WTC11 (cell line): ENCODE measurements at regions of chr5 and their contacts with region 1.

Region 1: GRCh38 chr5:141960449-141961202 is 2.6 kb upstream of the PCDH12 start:
- DNase-seq: peak; percentile 88
- ATAC-seq: peak; percentile 90
- H3K4me3 Mint-ChIP-seq: no peak overlapping the region
- H3K27ac Mint-ChIP-seq: 0 out of 2 replicates have a peak overlapping the region, but pooled peaks have one; percentile 24
- H3K4me1 Mint-ChIP-seq: peaks cover 38% of the 10 kb centered on the region
- H3K27me3 Mint-ChIP-seq: no peaks in the 10 kb centered on the region
- CTCF ChIP-seq: peak; percentile 91

Region 2: DNA sequence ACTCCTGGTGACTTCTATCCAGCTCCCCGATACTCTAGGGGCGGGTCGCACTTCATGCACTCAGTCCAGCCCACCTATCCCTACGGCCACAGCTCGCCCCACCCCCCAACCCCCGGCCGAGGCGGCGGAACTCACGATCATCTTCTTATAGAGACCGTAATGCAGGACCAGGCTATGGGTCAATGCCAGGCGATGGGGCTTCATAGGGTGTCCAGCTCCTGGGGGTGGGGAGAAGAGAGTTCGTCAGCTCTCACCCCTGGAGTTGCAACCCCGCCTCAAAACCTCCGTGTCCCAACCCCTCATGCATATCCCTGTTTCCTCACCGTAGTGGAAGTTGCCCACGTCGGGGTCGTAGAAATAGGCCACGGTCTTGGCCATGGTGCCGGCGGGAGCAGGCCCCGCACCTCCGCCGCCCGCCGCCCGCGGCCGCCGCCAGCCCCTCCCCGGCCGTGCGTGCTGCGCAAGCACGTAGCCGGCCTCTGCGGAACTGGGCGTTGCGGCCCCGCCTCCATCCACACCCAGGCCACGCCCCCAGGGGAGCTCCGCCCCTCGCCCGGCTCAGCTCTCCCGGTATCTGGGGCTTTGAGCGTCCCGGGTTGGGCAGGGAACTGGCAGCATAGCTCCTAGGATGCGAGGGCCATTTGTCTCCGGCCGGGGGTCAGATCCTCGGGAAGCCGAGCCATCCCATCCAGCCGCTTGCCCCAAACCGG is 324.1 kb before region 1 on chr5 and contains the starts of genes HDAC3 and RELL2:
- CTCF ChIA-PET with region 1: interaction called, 11 read pairs
- POLR2A ChIA-PET with region 1: no interaction called
- DNase-seq: peak; percentile 97
- ATAC-seq: peak; percentile 82
- H3K4me3 Mint-ChIP-seq: peak within 1 kb of the TSS; percentile 90
- H3K27ac Mint-ChIP-seq: peak within 1 kb of the TSS; percentile 90
- H3K4me1 Mint-ChIP-seq: peaks cover 22% of the 10 kb centered on the region
- H3K27me3 Mint-ChIP-seq: no peaks in the 10 kb centered on the region
- CTCF ChIP-seq: no peak
- total RNA-seq, gene HDAC3: 84.7 to 96.2 TPM (median 94.5 TPM) in 3 replicates
- total RNA-seq, gene RELL2: 19.3 to 23.8 TPM (median 21.4 TPM) in 3 replicates

Region 3: DNA sequence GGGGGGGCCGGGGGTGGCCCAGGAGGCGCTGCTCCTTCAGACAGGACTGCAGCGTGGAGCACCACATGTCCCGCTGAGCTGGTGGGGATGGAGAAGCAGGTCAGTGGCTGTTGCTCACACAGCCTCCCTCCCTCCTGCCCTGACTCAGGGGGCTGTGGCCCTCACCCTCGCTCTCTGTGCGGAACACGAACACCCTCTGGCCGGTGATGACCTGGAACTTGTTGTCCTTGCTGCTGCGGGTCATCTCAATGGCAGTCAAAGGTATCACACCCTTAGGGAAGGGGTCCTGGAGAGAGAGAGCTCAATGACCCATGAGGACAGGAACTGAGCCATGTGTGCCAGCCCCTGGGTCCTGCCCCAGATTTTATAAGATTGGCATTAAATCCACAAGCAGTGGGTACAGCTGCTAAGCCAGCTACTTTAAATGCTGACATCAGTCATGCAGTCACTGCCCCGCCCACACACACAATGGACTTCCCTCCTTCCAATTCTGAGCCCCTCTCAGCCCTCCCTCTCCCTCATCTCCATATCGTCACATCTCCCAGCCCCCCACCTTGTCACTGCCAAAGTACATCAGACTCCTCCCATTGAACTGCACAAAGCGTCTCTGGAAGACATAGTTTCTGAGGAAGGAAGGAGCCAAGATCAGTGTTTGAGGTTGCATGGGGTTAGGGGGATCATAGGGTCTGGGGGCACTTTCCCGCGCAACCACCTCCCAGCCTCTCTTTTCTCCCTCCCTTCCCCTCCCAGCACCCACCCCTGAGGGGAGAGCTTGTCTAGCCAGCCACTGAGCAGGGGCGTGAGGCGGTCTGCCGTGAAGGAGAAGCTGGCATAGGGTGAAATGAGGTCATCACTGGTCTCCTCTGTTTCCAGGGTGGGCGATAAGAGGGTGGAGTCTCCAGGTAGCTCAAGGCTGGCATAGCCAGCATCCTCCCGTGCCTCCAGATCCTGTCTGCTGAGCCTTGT is 287.5 kb before region 1 on chr5:
- CTCF ChIA-PET with region 1: interaction called, 29 read pairs
- POLR2A ChIA-PET with region 1: no interaction called
- DNase-seq: no peak
- ATAC-seq: peak; percentile 2; the same call in 1 of the 2 replicates
- H3K4me3 Mint-ChIP-seq: no peak overlapping the region
- H3K27ac Mint-ChIP-seq: peak overlapping the region; percentile 42
- H3K4me1 Mint-ChIP-seq: peaks cover 32% of the 10 kb centered on the region
- H3K27me3 Mint-ChIP-seq: no peaks in the 10 kb centered on the region
- CTCF ChIP-seq: no peak

Region 4: DNA sequence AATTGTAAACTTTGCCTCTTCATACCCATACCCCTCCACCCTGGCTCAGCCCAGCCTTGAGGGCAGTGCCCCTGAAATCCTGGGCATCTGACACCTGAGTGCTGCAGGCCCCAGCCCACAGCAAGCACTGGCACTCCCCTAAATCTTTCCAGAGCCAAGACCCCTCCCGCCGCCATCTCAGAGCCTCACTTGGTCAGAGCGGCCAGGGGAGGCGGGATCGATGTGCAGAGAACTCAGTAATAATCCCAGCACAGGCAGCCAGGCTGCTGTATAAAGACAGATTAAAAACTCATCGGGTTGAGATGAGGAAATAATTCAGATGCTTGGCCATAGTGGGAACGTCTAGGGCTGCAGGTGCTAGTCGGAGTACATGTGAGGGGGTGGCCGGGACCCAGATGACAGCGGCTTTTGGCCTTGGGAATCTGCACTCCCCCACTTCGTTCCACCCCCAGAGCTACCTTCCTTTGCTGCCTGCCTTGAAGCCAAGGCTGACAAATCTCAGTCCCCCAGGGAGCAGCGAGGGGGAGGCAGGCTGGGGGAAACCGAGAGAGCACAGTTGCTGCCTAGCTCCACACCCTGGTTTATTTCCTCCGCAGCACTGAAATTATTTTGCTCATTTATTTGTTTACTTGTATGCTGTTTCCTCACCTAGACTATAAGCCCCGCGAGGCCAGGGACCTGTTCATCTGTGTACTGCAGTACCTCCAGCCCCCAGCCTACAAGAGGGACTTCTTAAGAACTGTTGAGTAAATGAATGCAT is 259.1 kb before region 1 on chr5:
- CTCF ChIA-PET with region 1: interaction called, 136 read pairs
- POLR2A ChIA-PET with region 1: interaction called, 3 read pairs
- DNase-seq: no peak
- ATAC-seq: no peak
- H3K4me3 Mint-ChIP-seq: no peak overlapping the region; the same call in 1 of the 2 replicates
- H3K27ac Mint-ChIP-seq: no peak overlapping the region
- H3K4me1 Mint-ChIP-seq: peaks cover 22% of the 10 kb centered on the region
- H3K27me3 Mint-ChIP-seq: peaks cover 6% of the 10 kb centered on the region
- CTCF ChIP-seq: no peak

Region 5: GRCh38 chr5:141835928-141836670 is 124.5 kb before region 1 on chr5:
- CTCF ChIA-PET with region 1: interaction called, 17 read pairs
- POLR2A ChIA-PET with region 1: no interaction called
- DNase-seq: no peak
- ATAC-seq: peak; percentile 5; the same call in 1 of the 2 replicates
- H3K4me3 Mint-ChIP-seq: peak overlapping the region; percentile 29; the same call in 1 of the 2 replicates
- H3K27ac Mint-ChIP-seq: peak overlapping the region; percentile 96
- H3K4me1 Mint-ChIP-seq: peaks cover 76% of the 10 kb centered on the region
- H3K27me3 Mint-ChIP-seq: peaks cover 8% of the 10 kb centered on the region
- CTCF ChIP-seq: no peak

Region 6: GRCh38 chr5:141923448-141924352 is 36.9 kb before region 1 on chr5 and contains the start of gene DELE1:
- CTCF ChIA-PET with region 1: interaction called, 21 read pairs
- POLR2A ChIA-PET with region 1: interaction called, 5 read pairs
- DNase-seq: peak; percentile 93
- ATAC-seq: peak; percentile 96
- H3K4me3 Mint-ChIP-seq: peak within 1 kb of the TSS; percentile 67
- H3K27ac Mint-ChIP-seq: peak within 1 kb of the TSS; percentile 87
- H3K4me1 Mint-ChIP-seq: peaks cover 15% of the 10 kb centered on the region
- H3K27me3 Mint-ChIP-seq: no peaks in the 10 kb centered on the region
- CTCF ChIP-seq: no peak
- total RNA-seq, gene DELE1: 79.3 to 83.8 TPM (median 81.5 TPM) in 3 replicates

Region 7: GRCh38 chr5:141976176-141976575 is 15.6 kb after region 1 on chr5:
- CTCF ChIA-PET with region 1: interaction called, 76 read pairs
- POLR2A ChIA-PET with region 1: no interaction called
- DNase-seq: no peak
- ATAC-seq: no peak
- H3K4me3 Mint-ChIP-seq: no peak overlapping the region
- H3K27ac Mint-ChIP-seq: no peak overlapping the region
- H3K4me1 Mint-ChIP-seq: no peaks in the 10 kb centered on the region; the same call in 1 of the 2 replicates
- H3K27me3 Mint-ChIP-seq: no peaks in the 10 kb centered on the region
- CTCF ChIP-seq: no peak